Endothelial cell of umbilical vein (primary cell): ENCODE measurements at regions of chr4 and their contacts with region 1.

Region 1: DNA sequence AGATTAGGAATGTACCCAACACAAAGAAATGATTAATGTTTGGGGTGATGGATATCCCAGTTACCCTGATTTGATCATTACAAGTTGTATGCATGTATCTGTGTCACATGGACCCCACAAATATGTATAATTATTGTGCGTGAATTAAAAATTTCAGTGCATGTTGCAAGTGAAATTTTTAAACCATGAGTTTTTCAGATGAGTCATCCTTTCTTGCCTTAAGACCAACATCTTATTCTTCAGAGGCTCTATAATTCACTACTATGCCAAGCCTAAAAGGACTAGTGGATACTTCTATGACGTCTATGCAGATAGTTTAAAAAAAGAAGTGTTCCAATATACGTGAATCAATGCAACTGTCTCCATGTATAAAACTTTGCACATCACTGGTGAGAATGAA is 113.0 kb upstream of the SH3RF1 start:
- DNase-seq: no peak
- H3K4me3 ChIP-seq: no peak overlapping the region
- H3K27ac ChIP-seq: no peak overlapping the region
- H3K4me1 ChIP-seq: no peaks in the 10 kb centered on the region
- H3K27me3 ChIP-seq: no peaks in the 10 kb centered on the region
- CTCF ChIP-seq: no peak
- POLR2A ChIP-seq: no peak

Region 2: DNA sequence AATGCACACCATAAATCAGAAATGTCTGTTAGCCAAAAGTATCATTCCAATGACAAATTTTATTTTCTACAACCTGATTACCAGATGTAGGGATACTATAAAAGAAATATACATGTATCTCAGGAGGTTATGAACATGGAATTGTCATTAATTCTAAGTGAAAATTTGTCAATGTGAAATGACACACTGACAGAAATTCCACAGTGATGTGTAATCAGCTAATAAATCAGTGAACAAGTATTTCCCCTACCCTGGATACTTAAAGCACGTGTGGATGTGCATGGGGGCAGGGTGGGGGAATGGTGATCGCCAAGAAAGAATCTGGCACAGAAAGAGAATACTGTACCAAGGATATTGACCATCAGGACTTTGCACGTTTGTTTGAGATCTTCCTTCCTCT is 236.5 kb before region 1 on chr4:
- CTCF ChIA-PET with region 1: no interaction called
- POLR2A ChIA-PET with region 1: no interaction called
- dilution Hi-C with region 1: no loop called
- intact Hi-C with region 1: no loop called
- DNase-seq: peak; percentile 73
- H3K4me3 ChIP-seq: no peak overlapping the region
- H3K27ac ChIP-seq: peak overlapping the region; percentile 89
- H3K4me1 ChIP-seq: peaks cover 56% of the 10 kb centered on the region
- H3K27me3 ChIP-seq: no peaks in the 10 kb centered on the region
- CTCF ChIP-seq: no peak
- POLR2A ChIP-seq: no peak

Region 3: DNA sequence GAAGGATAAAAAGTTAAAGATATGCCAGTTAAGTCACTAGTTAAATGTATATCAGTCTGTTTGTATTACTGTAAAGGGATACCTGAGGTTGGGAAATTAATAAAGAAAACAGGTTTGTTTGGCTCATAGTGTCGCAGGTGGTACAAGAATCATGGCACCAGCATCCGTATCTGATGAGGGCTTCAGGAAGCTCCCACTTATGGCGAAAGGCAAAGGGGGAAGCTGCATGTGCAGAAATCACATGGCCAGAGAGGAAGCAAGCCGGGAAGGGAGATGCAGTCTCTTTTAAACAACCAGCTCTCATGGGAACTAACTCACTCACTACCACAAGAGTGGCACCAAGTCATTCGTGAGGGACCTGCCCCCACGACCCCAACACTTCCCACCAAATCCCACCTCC is 21.1 kb before region 1 on chr4:
- CTCF ChIA-PET with region 1: no interaction called
- POLR2A ChIA-PET with region 1: no interaction called
- dilution Hi-C with region 1: no loop called
- intact Hi-C with region 1: no loop called
- DNase-seq: no peak
- H3K4me3 ChIP-seq: no peak overlapping the region
- H3K27ac ChIP-seq: no peak overlapping the region
- H3K4me1 ChIP-seq: no peaks in the 10 kb centered on the region
- H3K27me3 ChIP-seq: no peaks in the 10 kb centered on the region
- CTCF ChIP-seq: no peak
- POLR2A ChIP-seq: no peak

Region 4: DNA sequence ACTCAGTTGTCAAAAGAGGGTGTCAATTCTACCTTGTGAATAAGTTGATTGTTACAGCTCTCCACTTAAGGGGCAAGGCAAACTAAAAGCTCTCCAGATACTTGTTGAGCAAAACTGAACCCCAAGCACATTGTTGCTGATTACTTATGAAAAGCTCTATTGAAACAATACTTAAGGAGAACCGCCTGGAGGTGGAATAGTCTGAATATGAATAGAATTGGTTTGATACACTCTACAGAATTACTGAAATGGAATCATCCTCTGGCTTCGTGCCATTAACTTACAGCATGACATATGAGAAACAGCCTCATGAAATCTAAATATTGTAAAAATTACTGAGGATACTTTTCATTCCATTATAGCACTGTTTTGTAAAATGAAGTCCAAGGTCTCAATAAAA is 14.0 kb after region 1 on chr4:
- CTCF ChIA-PET with region 1: interaction called, 10 read pairs
- POLR2A ChIA-PET with region 1: no interaction called
- dilution Hi-C with region 1: no loop called
- intact Hi-C with region 1: no loop called
- DNase-seq: peak; percentile 44
- H3K4me3 ChIP-seq: no peak overlapping the region
- H3K27ac ChIP-seq: peak overlapping the region; percentile 41
- H3K4me1 ChIP-seq: peaks cover 8% of the 10 kb centered on the region
- H3K27me3 ChIP-seq: no peaks in the 10 kb centered on the region
- CTCF ChIP-seq: no peak
- POLR2A ChIP-seq: no peak